K562 (cell line): ENCODE measurements at regions of chr1 and their contacts with region 1.

Region 1: GRCh38 chr1:112955781-112956543 is at the start of gene SLC16A1:
- DNase-seq: peak; percentile 97 to 98 (median 98)
- ATAC-seq: peak; percentile 84
- H3K4me3 ChIP-seq: peak within 1 kb of the TSS; percentile 74
- H3K27ac ChIP-seq: peak within 1 kb of the TSS; percentile 96
- H3K4me1 ChIP-seq: peaks cover 20 to 31% of the 10 kb centered on the region in 2 experiments
- H3K27me3 ChIP-seq: no peaks in the 10 kb centered on the region
- CTCF ChIP-seq: peak; percentile 42 to 59 (median 55); a peak in 5 of 6 replicates
- EP300 ChIP-seq: peak; percentile 53
- POLR2A ChIP-seq: peak; percentile 99
- RAD21 ChIP-seq: peak; percentile 71 to 77
- polyA plus RNA-seq, gene SLC16A1: 79.0 to 82.5 TPM

Region 2: DNA sequence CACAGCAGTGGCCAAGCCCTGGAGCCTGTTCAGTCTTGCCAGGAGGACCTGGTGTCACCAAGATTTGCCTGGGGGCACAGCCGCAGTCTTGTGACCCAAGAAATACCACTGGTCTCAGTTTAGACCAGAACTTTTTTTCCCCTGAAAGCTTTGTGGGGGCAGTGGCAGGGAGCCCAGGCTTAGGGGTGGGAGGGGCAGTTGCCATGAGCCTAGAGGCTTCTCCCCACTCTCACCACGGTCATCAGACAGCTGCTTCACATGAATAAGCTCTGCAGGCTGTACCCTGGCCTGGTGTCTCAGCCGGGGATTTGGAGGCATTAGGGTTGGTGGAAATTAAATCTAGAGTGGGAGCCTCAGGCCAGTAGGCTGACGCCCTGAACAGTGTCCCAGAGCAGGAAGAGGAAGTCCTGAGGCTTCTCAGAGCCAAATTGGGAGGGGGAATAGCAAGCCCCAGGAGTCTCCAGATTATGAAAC is 73.7 kb before region 1 on chr1:
- CTCF ChIA-PET with region 1: interaction called, 15 read pairs
- POLR2A ChIA-PET with region 1: interaction called, 20 read pairs
- in situ Hi-C with region 1: no loop called
- intact Hi-C with region 1: loop called (anchors 1 kb)
- DNase-seq: no peak
- ATAC-seq: peak; percentile 13
- H3K4me3 ChIP-seq: no peak overlapping the region
- H3K27ac ChIP-seq: peak overlapping the region; percentile 34; the same call in 2 of the 3 replicates
- H3K4me1 ChIP-seq: peaks cover 28 to 31% of the 10 kb centered on the region in 2 experiments
- H3K27me3 ChIP-seq: peaks cover 0 to 4% of the 10 kb centered on the region in 2 experiments; a peak in 1 of 5 replicates
- CTCF ChIP-seq: no peak
- EP300 ChIP-seq: no peak
- POLR2A ChIP-seq: no peak
- RAD21 ChIP-seq: no peak

Region 3: DNA sequence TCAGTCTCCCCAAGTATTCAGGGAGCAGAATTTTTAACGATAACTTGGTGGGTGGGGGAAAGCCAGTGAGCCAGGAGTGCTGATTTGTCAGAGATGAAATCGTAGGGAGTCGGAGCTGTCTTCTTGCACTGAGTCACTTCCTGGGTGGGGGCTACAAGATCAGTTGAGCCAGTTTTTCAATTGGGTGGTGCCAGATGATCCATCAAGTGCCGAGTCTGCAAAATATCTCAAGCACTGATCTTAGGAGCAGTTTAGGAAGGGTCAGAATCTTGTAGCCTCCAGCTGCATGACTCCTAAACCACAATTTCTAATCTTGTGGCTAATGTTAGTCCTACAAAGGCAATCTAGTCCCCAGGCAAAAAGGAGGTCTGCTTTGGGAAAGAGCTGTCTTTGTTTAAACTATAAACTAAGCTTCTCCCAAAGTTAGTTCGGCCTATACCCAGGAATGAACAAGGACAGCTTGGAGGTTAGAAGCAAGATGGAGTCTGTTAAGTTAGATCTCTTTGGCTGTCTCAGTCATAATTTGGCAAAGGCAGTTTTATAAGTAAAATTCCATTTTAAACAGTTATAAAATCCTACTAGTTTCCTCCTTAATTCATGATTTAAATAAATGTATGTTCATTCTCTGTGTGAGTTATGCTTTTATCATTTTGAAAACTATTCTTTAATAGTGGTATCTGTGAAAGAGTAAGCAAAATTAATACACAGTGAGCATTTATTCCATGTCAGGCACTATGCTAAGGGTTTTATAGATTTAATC is 51.7 kb before region 1 on chr1:
- CTCF ChIA-PET with region 1: no interaction called
- POLR2A ChIA-PET with region 1: interaction called, 21 read pairs
- in situ Hi-C with region 1: no loop called
- intact Hi-C with region 1: loop called (anchors 2 kb)
- DNase-seq: peak in 2 of 4 experiments; percentile 72 to 93
- ATAC-seq: peak; percentile 86
- H3K4me3 ChIP-seq: no peak overlapping the region
- H3K27ac ChIP-seq: peak overlapping the region; percentile 62; the same call in 2 of the 3 replicates
- H3K4me1 ChIP-seq: peaks cover 11 to 32% of the 10 kb centered on the region in 2 experiments; a peak in 4 of 5 replicates
- H3K27me3 ChIP-seq: no peaks in the 10 kb centered on the region
- CTCF ChIP-seq: no peak
- EP300 ChIP-seq: peak; percentile 61; the same call in 1 of the 2 replicates
- POLR2A ChIP-seq: no peak
- RAD21 ChIP-seq: no peak

Region 4: DNA sequence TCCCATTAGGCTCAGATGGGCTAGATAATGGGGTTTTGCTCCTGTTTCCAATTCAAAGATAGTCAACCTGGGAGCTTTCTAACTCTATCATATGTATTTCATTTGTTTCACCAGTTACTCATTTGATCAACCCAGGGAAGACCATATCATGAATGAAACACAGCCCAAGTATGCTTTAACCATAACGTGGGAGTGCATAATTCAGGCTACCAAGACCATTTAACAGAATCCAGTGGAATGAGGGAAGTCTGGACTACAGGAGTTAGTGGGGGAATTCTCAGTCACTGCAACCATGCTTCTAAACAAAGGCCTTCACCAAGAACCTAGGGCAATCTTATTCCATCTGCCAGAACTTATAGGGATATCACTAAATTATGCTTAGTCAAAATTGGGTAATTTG is 15.0 kb after region 1 on chr1:
- CTCF ChIA-PET with region 1: no interaction called
- POLR2A ChIA-PET with region 1: interaction called, 20 read pairs
- in situ Hi-C with region 1: no loop called
- intact Hi-C with region 1: no loop called
- DNase-seq: no peak
- ATAC-seq: no peak
- H3K4me3 ChIP-seq: no peak overlapping the region
- H3K27ac ChIP-seq: no peak overlapping the region
- H3K4me1 ChIP-seq: no peaks in the 10 kb centered on the region; a peak in 1 of 5 replicates
- H3K27me3 ChIP-seq: no peaks in the 10 kb centered on the region
- CTCF ChIP-seq: no peak
- EP300 ChIP-seq: no peak
- POLR2A ChIP-seq: no peak
- RAD21 ChIP-seq: no peak

Region 5: DNA sequence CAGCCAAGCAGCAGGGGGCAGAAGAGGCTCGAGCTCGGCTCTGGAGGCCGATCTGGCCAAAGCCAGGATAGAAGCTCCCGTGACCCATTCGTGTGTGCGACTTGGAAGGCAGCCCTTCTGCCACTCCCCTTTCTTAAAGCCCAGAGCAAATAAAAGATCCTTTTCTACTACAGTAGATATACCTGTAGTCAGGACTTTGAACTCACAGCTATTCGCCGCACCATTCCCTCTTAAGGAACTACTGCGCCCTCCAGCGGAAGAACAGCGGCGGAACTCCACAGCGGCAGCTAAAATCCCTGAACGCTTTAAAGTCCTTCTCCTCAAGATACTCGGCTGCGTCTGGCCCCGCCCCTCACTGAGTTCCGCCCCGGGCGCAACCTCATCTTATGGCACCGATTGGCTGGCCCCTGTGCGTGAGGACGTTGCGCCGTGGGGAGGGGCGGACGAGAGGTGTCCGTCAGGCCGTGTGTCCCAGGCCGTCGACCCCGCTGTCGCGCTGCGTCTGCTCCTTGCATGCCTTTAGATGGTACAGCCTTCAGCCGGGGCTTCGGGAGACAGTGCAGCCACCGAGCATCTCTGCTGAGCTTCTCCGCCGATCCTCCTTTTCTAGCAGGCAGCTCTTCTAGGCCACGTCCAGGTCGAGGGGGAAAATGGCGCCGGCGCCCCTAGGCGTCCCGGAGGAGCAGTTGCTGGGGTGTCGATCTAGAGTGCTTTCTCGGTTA is 117.0 kb after region 1 on chr1 and contains the start of gene LRIG2:
- CTCF ChIA-PET with region 1: no interaction called
- POLR2A ChIA-PET with region 1: interaction called, 14 read pairs
- in situ Hi-C with region 1: no loop called
- intact Hi-C with region 1: no loop called
- DNase-seq: peak; percentile 96 to 100 (median 97)
- ATAC-seq: peak; percentile 97
- H3K4me3 ChIP-seq: peak within 1 kb of the TSS; percentile 96
- H3K27ac ChIP-seq: peak within 1 kb of the TSS; percentile 96
- H3K4me1 ChIP-seq: peaks cover 16% of the 10 kb centered on the region in 2 experiments
- H3K27me3 ChIP-seq: no peaks in the 10 kb centered on the region
- CTCF ChIP-seq: peak; percentile 75 to 97 (median 95)
- EP300 ChIP-seq: no peak; the same call in 1 of the 2 replicates
- POLR2A ChIP-seq: peak; percentile 98
- RAD21 ChIP-seq: peak; percentile 81 to 87
- polyA plus RNA-seq, gene LRIG2: 1.8 to 3.3 TPM